CD14-positive monocyte (primary cell): ENCODE measurements at regions of chr15 and their contacts with region 1.

Region 1: GRCh38 chr15:79989682-79990081 is 18.7 kb upstream of the BCL2A1 start:
- DNase-seq: peak; percentile 79 to 95 (median 92)
- H3K4me3 ChIP-seq: peak overlapping the region in 1 of 3 experiments; percentile 39
- H3K4me3 Mint-ChIP-seq: peak overlapping the region; percentile 43 to 55
- H3K27ac ChIP-seq: peak overlapping the region; percentile 77
- H3K27ac Mint-ChIP-seq: peak overlapping the region; percentile 87 to 95 (median 91)
- H3K4me1 ChIP-seq: peaks cover 35 to 41% of the 10 kb centered on the region in 2 donors
- H3K4me1 Mint-ChIP-seq: peaks cover 46% of the 10 kb centered on the region
- H3K27me3 ChIP-seq: no peaks in the 10 kb centered on the region
- H3K27me3 Mint-ChIP-seq: peaks cover 0 to 1% (median 0%) of the 10 kb centered on the region in 3 donors
- CTCF ChIP-seq: no peak

Region 2: DNA sequence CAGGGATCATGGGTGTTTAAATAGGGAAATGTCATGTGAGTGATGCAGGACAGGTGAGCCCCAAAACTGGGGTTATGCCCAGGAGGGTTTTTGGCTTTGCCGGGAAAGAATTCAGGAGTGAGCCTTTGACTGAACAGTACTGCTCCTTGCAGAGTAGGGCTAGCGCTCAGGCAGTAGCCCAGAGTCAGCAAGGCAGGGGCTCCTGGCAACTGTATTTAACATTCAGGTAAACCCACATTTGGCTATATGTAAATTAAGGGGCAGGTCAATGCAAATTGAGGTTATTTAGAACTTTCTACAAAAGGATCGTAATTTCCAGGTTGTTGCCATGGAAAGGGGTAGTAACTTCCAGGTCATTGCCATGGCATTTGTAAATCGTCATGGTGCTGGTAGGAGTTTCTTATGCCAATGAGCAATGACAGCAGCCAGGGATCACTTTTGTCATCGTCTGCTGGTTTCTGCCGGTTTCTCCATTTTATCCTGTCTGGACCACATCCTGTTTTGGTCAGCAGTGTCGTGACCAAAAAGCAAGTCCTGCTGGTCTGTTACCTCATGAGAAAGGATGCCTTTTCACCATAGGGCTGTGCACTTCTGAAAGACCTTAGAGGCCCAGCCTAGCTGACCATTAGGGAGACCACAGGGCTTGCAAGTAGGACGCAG is 117.2 kb before region 1 on chr15:
- intact Hi-C with region 1: no loop called
- DNase-seq: peak; percentile 80 to 86 (median 84)
- H3K4me3 ChIP-seq: no peak overlapping the region
- H3K4me3 Mint-ChIP-seq: no peak overlapping the region
- H3K27ac ChIP-seq: peak overlapping the region in 1 of 2 donors; percentile 71
- H3K27ac Mint-ChIP-seq: peak overlapping the region; percentile 61 to 92 (median 85)
- H3K4me1 ChIP-seq: peaks cover 3 to 11% of the 10 kb centered on the region in 2 donors
- H3K4me1 Mint-ChIP-seq: peaks cover 14% of the 10 kb centered on the region
- H3K27me3 ChIP-seq: no peaks in the 10 kb centered on the region
- H3K27me3 Mint-ChIP-seq: no peaks in the 10 kb centered on the region
- CTCF ChIP-seq: no peak

Region 3: DNA sequence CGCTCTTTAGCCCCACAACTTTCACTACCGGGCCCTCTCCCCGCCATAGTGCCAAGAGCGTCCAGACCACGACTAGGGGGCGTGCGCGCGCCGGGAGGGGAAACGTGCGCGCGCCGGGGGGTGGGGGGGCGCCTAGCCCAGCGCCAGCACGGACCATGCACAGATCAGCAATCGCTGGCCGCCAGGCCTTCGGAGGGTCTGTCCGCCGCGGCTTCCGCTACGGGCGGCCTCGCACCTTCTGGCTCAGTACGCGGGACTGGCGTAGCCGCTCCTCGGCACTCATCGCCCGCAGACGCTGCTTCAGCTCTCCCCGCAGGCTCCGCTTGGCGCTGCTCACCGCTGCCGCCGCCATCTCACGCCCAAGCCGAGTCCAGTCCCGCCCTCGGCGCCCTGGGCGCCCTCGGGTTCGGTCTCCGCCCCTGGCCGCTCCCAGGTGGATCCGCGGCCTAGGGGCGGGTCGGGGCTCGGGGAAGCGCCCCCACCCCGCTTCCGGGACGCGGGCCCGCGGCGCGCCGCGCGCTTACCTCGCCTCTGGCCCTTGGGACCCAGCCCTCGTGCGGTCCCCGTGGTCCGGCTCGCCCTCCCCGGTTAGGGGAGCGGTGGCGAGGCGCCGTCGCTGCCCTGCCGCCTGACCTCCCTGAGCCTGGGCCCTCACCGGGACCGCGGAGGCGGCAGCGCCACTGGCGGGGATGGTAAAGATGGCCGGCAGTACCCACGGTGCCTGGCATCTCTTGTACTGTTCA is 92.9 kb before region 1 on chr15 and contains the start of gene MTHFS:
- intact Hi-C with region 1: loop called in 1 of 2 experiments (anchors 5 kb)
- DNase-seq: peak; percentile 72 to 78 (median 75)
- H3K4me3 ChIP-seq: peak within 1 kb of the TSS; percentile 47 to 86 (median 68)
- H3K4me3 Mint-ChIP-seq: peak within 1 kb of the TSS; percentile 99
- H3K27ac ChIP-seq: peak within 1 kb of the TSS; percentile 82 to 98
- H3K27ac Mint-ChIP-seq: peak within 1 kb of the TSS; percentile 94 to 100 (median 99)
- H3K4me1 ChIP-seq: peaks cover 49 to 69% of the 10 kb centered on the region in 2 donors
- H3K4me1 Mint-ChIP-seq: peaks cover 56% of the 10 kb centered on the region
- H3K27me3 ChIP-seq: no peaks in the 10 kb centered on the region
- H3K27me3 Mint-ChIP-seq: no peaks in the 10 kb centered on the region
- CTCF ChIP-seq: peak; percentile 54
- polyA plus RNA-seq, gene MTHFS: 44.6 to 129 (median 76.4) TPM

Region 4: DNA sequence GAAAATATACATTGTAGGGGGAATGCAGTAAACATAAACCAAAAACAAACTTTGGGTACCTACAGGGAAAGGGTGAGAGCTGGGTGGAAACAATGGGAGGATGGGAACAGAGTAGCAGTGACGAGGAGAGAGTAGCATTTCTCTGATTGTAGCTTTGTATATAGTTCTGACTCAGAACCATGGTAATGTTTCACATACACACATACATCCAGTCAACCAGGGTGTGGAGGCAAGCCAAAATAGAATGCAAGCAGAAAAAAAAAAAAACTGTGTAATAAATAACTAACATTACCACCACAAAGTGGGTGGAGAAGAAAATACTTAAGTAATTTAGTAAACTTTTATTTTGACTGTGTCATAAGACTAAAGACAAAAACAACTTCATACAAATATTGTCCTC is 45.9 kb before region 1 on chr15:
- intact Hi-C with region 1: loop called in 1 of 2 experiments (anchors 10 kb)
- DNase-seq: no peak
- H3K4me3 ChIP-seq: no peak overlapping the region
- H3K4me3 Mint-ChIP-seq: no peak overlapping the region
- H3K27ac ChIP-seq: no peak overlapping the region
- H3K27ac Mint-ChIP-seq: peak overlapping the region in 2 of 7 donors; percentile 22 to 35
- H3K4me1 ChIP-seq: peaks cover 16 to 37% of the 10 kb centered on the region in 2 donors
- H3K4me1 Mint-ChIP-seq: peaks cover 34% of the 10 kb centered on the region
- H3K27me3 ChIP-seq: no peaks in the 10 kb centered on the region
- H3K27me3 Mint-ChIP-seq: peaks cover 2 to 9% (median 4%) of the 10 kb centered on the region in 3 donors
- CTCF ChIP-seq: no peak

Region 5: DNA sequence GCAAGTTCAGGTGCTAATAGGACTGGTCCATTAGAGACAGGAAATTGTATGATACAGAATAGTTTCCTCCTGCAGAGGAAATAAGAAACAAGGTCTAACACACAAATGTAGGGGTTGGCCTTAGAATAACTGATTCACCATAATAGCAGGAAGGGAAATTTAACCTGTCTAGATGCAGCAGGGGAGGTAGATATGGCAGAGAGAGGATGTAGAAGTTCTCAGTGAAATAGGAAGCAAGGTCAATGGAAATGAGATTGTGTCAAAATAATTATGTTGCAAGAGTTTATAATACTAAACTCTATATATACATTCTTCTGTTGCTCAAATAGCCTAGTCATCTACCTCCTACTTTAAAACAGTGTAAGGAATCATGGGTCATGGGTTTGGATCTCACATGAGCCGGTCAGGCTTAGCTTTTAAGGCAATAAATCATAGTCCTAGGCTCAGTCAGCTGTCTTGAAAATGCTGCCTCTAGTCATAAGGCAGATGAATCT is 35.7 kb before region 1 on chr15:
- intact Hi-C with region 1: loop called (anchors 5 to 10 kb)
- DNase-seq: peak; percentile 84 to 92 (median 87)
- H3K4me3 ChIP-seq: peak overlapping the region in 1 of 3 experiments; percentile 58
- H3K4me3 Mint-ChIP-seq: peak overlapping the region; percentile 53 to 55
- H3K27ac ChIP-seq: peak overlapping the region; percentile 92 to 93
- H3K27ac Mint-ChIP-seq: peak overlapping the region; percentile 95 to 99 (median 98)
- H3K4me1 ChIP-seq: peaks cover 55 to 60% of the 10 kb centered on the region in 2 donors
- H3K4me1 Mint-ChIP-seq: peaks cover 50% of the 10 kb centered on the region
- H3K27me3 ChIP-seq: no peaks in the 10 kb centered on the region
- H3K27me3 Mint-ChIP-seq: peaks cover 0 to 3% (median 0%) of the 10 kb centered on the region in 3 donors
- CTCF ChIP-seq: no peak

Region 6: DNA sequence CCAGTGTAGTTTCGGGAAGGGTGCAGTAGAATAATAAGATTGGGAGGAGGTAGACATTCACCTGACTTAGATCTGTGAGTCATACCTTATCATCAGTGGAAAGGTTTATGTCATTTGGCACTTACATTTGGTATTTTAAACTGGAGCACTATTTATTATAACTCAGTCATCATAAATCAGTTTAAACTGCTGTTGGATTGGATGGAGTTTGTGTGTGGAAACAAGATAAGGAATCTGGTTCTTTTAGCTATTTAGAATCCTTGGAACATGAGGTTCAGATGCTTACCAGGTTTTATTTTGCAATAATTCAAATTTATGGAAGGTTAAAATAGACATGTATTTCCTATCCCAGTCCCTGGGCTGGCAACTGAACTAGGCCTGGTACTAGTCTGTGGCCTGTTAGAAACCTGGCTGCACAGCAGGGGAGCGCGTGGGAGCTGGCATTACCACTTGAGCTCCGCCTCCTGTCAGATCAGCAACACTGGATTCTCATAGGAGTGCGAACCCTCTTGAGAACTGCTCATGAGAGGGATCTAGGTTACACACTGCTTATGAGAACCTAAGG is 104.3 kb after region 1 on chr15:
- intact Hi-C with region 1: no loop called
- DNase-seq: no peak
- H3K4me3 ChIP-seq: no peak overlapping the region
- H3K4me3 Mint-ChIP-seq: no peak overlapping the region
- H3K27ac ChIP-seq: no peak overlapping the region
- H3K27ac Mint-ChIP-seq: no peak overlapping the region
- H3K4me1 ChIP-seq: no peaks in the 10 kb centered on the region
- H3K4me1 Mint-ChIP-seq: no peaks in the 10 kb centered on the region
- H3K27me3 ChIP-seq: no peaks in the 10 kb centered on the region
- H3K27me3 Mint-ChIP-seq: no peaks in the 10 kb centered on the region
- CTCF ChIP-seq: no peak